HEK293T (cell line): ENCODE measurements at regions of chr14 and their contacts with region 1.

Region 1: DNA sequence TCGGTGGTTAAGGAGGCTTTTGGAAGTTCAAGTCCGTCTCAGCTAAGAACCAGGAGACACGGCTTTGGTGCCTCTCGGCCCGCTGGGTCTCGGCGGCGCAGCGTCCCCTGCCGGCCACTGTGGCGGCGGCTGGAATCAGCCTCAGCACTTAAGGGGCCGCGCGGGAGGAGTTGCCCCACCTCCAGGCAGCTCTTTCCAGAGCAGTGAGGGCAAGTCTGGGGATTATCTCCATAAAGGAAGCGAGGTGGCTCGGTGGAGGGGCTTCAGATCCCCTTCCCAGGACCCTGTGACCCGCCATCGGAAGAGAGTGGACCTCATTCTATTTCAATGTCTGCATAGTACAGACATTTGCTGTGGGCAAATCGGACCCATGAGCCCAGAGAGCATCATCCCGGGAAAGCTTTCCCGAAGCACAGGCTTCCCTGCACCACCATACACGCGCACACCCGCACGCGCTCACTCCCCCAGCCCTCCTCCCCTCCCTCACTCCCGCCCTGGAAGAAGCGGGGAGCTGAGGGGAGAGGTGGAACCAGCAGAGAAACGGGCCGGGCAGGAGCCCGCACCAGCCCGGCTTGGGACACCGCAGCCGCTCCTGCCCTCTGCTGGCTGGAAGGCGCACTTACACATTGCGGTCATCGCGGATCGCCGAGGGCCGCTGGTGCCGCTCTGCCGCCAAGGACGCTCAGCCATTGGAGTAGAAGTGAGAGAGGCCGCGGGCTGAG is 15.9 kb downstream of the RNASE2 start:
- DNase-seq: peak; percentile 85

Region 2: GRCh38 chr14:20857630-20858261 is 113.4 kb before region 1 on chr14:
- CTCF ChIA-PET with region 1: interaction called, 43 read pairs
- POLR2A ChIA-PET with region 1: interaction called, 15 read pairs
- DNase-seq: peak; percentile 73

Region 3: GRCh38 chr14:20956376-20956976 is 14.7 kb before region 1 on chr14:
- CTCF ChIA-PET with region 1: interaction called, 49 read pairs
- POLR2A ChIA-PET with region 1: interaction called, 30 read pairs
- DNase-seq: no peak

Region 4: DNA sequence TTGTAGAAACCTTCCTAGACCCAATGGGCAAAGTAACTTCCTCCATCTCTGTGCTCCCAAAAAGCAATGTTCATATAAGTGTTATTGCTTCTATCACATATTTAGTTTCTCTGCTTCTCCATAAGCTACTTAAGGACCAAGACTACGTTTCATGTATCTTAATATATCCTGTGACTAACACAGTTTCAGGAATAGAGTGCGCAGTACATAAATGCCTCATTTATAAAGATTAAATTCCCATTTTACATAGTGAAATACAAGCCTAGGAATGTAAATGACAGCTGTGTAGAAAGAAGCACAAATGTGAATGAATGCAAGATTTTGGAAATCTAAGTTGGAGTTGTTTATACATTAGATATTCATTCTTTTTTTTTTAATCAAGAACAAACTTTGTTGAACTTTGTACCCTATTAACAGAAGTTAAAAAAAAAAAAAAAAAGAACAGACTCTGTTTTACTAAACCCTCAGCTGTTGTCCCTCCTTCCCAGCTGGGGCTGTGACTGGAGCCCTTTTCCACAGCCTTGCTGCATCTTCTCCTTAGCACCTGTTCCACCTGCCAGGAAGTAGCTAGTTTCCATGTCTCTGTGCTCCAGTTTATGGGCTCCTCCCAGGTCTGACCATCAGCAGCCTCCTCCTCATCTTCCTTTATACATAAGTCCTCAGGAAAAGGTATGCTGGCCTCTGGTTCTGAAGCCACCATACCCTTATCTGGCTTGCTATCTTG is 11.7 kb after region 1 on chr14:
- CTCF ChIA-PET with region 1: interaction called, 12 read pairs
- POLR2A ChIA-PET with region 1: interaction called, 21 read pairs
- DNase-seq: no peak

Region 5: GRCh38 chr14:20989572-20990551 is 18.7 kb after region 1 on chr14 and contains the start of gene METTL17:
- CTCF ChIA-PET with region 1: interaction called, 9 read pairs
- POLR2A ChIA-PET with region 1: interaction called, 10 read pairs
- DNase-seq: peak; percentile 90

Region 6: DNA sequence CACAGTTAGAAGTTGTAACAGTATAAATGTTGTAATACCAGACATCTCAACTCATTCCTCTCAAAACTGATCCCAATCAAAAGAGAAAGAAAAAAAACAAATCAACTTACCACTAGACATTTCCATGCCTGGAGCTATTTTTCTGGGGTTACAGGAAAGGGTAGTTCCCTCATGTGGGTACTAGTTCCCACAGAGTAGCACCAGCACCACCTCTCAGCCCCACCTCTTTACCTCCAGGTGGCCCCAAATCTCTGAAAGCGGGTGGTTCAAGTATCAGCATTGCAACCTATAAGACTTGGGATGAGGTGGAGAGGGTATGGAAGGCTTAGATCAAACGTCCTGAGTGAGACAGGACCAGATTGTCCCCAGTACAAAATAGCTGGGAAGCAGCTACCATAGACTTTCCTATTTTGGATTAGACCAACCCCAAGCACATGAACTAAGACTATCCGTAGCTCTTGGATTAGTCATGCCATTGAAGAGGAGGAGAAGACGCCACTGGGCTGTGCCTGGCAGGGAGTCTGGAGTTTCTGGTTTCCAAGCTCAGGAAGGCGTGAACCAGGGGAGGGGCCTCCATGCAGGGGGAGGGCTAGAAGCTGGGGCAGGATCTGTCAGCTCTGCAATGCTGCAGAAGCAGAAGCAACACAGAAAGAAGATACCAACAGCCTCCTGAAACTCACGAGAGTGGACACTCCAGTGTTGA is 27.7 kb after region 1 on chr14 and contains the start of gene SLC39A2:
- CTCF ChIA-PET with region 1: interaction called, 3 read pairs
- POLR2A ChIA-PET with region 1: interaction called, 15 read pairs
- DNase-seq: peak; percentile 22